AG04449 (cell line): ENCODE measurements at regions of chr11 and their contacts with region 1.

Region 1: GRCh38 chr11:101860696-101861427 is 53.9 kb upstream of the CEP126 start:
- DNase-seq: no peak
- H3K4me3 ChIP-seq: no peak overlapping the region
- CTCF ChIP-seq: peak; percentile 74

Region 2: GRCh38 chr11:101428918-101429317 is 431.9 kb before region 1 on chr11:
- CTCF ChIA-PET with region 1: interaction called, 13 read pairs
- POLR2A ChIA-PET with region 1: no interaction called
- DNase-seq: no peak
- H3K4me3 ChIP-seq: no peak overlapping the region
- CTCF ChIP-seq: peak; percentile 45

Region 3: DNA sequence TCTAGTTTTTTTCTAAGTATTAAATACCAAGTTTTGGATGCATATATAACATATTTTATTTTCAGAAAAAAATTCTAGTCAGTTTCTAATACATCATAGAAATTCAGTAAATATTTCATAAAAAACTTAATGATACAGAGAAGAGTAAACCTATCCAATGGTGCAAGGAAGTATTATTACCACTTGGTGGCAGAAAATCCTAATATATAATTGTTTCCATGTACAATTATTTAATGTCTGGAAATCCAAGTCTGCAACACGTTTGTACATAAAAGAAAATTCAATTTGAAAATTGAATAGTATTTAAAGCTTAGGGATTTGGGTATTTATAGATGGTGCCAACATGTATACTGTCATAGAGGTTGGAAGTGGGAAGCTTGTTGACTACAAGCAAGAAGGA is 404.1 kb before region 1 on chr11:
- CTCF ChIA-PET with region 1: interaction called, 32 read pairs
- POLR2A ChIA-PET with region 1: no interaction called
- DNase-seq: no peak
- H3K4me3 ChIP-seq: no peak overlapping the region
- CTCF ChIP-seq: no peak

Region 4: DNA sequence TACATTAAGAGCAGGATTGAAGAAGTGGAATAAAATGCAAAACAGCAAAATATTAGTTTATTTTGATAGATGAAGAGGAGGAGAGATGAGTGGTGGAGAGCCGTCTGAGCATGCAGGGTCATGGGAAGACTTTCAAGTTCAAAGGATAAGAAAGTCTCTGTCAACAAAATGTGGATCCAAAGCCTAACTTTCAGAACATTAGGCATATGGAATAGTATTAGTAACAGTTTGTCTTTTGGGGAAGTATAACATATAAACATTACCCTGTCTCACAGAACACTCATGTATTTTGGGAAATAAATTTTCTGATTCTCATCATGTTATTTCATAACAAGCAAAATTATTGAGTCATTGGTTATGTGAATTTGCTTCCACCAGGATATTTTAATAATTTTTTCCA is 50.3 kb before region 1 on chr11:
- CTCF ChIA-PET with region 1: no interaction called
- POLR2A ChIA-PET with region 1: no interaction called
- DNase-seq: no peak
- H3K4me3 ChIP-seq: no peak overlapping the region
- CTCF ChIP-seq: no peak

Region 5: DNA sequence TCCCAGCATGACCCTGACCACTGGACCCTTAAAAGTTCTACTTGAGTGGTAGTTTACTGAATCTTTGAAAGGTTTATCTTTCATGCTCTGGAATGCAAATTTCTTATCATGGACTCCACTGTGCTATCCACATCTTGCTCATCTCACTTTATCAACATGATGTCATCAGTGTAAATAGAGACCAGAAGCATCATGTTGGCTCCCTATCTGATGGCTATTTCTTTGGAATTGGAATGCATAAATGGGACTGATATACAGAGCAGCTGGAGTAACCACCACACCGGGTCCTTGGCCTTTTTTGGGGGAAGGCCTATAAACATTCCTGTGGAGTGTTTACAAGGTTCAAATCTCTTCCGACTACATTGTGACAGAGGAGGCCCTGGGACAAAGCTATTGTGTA is 20.2 kb before region 1 on chr11:
- CTCF ChIA-PET with region 1: no interaction called
- POLR2A ChIA-PET with region 1: no interaction called
- DNase-seq: no peak
- H3K4me3 ChIP-seq: no peak overlapping the region
- CTCF ChIP-seq: no peak

Region 6: DNA sequence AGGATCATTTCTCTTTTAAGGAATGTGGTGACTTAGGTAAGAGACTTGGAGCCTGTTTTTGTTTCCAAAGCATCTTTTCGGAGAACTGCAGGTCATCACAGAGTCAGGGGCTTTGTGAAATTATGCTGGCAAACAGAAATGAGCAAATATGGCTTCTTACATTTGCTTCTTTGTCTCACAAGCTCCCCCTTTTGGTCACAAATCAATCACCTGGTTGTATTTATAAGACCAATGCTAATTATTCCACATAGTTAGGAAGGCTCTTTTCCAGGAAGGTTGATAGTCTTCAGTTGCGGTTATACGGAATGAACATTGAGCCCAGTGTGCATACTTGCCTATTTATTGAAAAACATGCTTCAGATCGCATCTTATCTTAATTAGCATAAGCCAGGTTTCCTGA is 19.4 kb after region 1 on chr11:
- CTCF ChIA-PET with region 1: interaction called, 130 read pairs
- POLR2A ChIA-PET with region 1: no interaction called
- DNase-seq: no peak
- H3K4me3 ChIP-seq: no peak overlapping the region
- CTCF ChIP-seq: peak; percentile 44

Region 7: DNA sequence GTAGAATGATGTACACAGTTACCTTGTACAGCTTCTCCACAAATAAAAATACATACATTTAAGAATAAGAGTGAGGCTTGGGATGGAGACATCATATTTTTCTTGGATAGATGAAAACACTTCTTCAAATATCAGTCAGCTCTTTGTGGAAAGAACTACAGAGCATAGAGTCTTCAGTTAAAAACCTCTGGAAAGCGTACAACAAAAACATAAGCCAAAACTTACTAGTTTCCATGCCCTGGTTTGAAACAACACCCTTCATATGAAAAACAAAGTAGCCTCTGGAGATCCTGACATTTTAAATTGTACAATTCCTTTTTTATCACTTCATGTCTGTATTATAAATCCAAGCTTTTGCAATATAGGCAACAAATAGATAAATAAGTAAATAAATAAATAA is 47.0 kb after region 1 on chr11:
- CTCF ChIA-PET with region 1: interaction called, 21 read pairs
- POLR2A ChIA-PET with region 1: no interaction called
- DNase-seq: no peak
- H3K4me3 ChIP-seq: no peak overlapping the region
- CTCF ChIP-seq: no peak

Region 8: DNA sequence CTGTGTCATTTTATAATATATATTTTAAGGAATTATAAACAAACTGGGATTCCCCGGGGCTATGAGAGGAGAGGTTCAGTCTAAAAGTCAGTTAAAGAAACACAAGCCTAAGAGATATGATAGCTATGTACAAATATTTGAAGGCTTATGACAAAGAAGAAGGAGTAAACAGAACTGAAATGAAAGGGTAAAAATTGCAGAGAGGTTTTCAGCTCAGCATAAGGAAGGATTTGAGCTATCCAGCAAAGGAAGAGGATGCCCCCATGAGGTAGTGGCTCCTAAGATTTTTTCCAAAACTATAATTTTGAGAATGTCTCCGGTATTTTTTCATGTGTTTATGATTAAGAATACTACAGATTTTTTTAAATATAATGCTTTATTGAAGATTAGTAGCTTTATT is 113.4 kb after region 1 on chr11:
- CTCF ChIA-PET with region 1: interaction called, 69 read pairs
- POLR2A ChIA-PET with region 1: no interaction called
- DNase-seq: no peak
- H3K4me3 ChIP-seq: no peak overlapping the region
- CTCF ChIP-seq: peak; percentile 5

Region 9: DNA sequence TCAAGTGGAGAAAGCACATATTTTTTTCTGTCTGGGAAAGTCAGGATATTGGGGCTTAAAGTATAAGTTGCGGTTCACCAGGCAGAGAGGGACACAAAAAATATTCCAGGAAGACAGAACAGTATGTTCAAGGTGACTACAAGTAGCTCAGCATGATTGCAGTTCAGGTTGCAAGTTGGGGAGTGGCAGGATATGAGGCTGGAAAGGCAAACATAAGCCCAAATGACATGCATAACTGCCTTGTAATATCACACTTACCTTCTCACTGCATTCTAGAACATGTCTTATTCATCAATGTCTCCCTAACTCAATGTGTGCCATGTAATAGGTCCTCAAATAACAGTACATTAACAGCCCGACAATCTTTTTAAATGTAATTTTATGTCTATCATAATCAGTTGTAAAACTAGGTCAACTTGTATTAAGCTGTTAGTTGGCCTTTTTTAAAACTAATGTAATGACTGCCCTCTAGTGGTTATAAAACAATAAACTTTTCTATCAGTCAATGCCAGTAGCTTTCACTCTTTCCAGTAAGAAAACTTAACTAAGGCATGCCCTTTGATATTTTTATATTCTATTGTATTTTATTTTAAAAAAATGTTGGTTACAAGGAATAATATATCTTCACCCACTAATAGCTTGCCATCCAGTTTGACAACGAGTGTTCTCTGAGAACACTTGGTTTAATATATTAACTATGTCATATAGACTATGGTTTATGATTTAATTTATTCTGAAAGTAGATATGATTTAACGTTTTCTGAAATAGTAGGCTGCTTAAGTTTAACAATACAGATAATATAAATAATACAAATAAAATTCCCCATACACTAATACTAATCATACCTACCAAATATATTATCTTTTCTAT is 146.9 kb after region 1 on chr11:
- CTCF ChIA-PET with region 1: interaction called, 436 read pairs
- POLR2A ChIA-PET with region 1: interaction called, 3 read pairs
- DNase-seq: peak; percentile 24
- H3K4me3 ChIP-seq: no peak overlapping the region
- CTCF ChIP-seq: peak; percentile 21

Region 10: GRCh38 chr11:102081313-102081712 is 220.5 kb after region 1 on chr11:
- CTCF ChIA-PET with region 1: no interaction called
- POLR2A ChIA-PET with region 1: no interaction called
- DNase-seq: no peak
- H3K4me3 ChIP-seq: no peak overlapping the region
- CTCF ChIP-seq: no peak